A673 (cell line): ENCODE measurements at regions of chr9 and their contacts with region 1.

Region 1: GRCh38 chr9:5425006-5425628 is 12.6 kb downstream of the PLGRKT start:
- DNase-seq: peak; percentile 57
- H3K4me3 ChIP-seq: no peak overlapping the region
- H3K27ac ChIP-seq: no peak overlapping the region
- H3K4me1 ChIP-seq: no peaks in the 10 kb centered on the region
- H3K27me3 ChIP-seq: no peaks in the 10 kb centered on the region
- CTCF ChIP-seq: peak; percentile 58

Region 2: DNA sequence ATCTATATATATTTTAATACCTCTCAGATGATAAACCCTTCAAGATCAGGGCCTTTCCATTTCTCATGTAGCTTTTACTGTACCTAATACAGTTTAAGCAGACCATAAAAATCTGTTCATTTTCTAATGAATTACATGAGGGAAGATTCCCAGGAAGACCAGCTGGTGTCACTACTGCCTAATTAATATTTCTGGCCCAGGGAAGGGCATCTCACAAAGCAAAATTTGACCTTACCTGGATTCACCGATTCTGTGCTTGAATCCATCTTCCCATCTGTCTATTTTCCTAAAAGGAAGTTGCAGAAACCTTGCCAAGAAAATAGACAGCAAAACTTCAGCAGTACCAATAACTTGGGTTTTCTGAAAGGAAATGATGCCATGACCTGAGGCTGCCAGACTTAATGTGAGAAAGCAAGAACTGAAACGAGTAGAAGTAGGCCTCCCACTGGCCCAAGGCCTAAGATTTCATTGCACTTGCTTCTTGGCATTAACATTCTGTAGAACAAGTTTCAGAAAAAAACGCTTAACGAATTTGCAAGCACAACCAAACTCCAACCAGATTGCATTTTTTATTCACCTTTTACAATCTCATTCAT is 1042.3 kb before region 1 on chr9:
- CTCF ChIA-PET with region 1: no interaction called
- POLR2A ChIA-PET with region 1: no interaction called
- intact Hi-C with region 1: loop called (anchors 5 kb)
- DNase-seq: peak; percentile 63
- H3K4me3 ChIP-seq: no peak overlapping the region
- H3K27ac ChIP-seq: no peak overlapping the region
- H3K4me1 ChIP-seq: peaks cover 10% of the 10 kb centered on the region
- H3K27me3 ChIP-seq: no peaks in the 10 kb centered on the region
- CTCF ChIP-seq: peak; percentile 75

Region 3: DNA sequence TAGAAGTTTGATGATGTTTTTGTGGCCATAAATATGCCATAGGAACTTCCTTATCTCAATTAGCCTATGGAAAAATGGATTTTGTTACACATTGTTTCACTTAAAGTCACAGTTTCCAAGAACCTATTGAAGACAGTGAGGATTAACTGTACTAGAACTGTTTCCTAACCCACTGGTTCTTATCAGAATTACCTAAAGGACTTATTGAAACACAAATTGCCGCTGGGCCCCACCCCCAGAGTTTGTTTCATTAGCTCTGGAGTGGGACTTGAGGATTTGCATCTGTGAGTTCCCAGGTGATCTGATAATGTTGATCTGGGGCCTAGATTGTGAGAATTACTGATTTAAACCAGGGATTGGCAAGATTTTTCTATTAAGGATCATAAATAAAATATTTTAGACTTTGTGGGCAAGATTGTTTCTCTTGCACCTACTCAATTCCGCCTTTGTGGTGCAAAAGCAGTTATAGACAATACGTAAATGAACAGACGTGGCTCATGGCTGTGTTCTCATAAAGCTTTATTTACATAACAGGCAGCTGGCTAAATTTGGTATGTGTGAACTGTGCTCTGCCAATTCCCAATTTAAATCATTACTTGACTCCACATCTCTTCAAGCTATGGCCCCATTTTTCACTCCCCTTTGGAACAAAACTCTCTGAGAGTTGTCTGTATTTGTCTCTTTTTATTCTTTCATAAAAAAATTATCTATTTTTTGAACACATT is 430.8 kb before region 1 on chr9:
- CTCF ChIA-PET with region 1: no interaction called
- POLR2A ChIA-PET with region 1: no interaction called
- intact Hi-C with region 1: loop called (anchors 10 kb)
- DNase-seq: no peak
- H3K4me3 ChIP-seq: no peak overlapping the region
- H3K27ac ChIP-seq: no peak overlapping the region
- H3K4me1 ChIP-seq: peaks cover 4% of the 10 kb centered on the region
- H3K27me3 ChIP-seq: no peaks in the 10 kb centered on the region
- CTCF ChIP-seq: no peak

Region 4: DNA sequence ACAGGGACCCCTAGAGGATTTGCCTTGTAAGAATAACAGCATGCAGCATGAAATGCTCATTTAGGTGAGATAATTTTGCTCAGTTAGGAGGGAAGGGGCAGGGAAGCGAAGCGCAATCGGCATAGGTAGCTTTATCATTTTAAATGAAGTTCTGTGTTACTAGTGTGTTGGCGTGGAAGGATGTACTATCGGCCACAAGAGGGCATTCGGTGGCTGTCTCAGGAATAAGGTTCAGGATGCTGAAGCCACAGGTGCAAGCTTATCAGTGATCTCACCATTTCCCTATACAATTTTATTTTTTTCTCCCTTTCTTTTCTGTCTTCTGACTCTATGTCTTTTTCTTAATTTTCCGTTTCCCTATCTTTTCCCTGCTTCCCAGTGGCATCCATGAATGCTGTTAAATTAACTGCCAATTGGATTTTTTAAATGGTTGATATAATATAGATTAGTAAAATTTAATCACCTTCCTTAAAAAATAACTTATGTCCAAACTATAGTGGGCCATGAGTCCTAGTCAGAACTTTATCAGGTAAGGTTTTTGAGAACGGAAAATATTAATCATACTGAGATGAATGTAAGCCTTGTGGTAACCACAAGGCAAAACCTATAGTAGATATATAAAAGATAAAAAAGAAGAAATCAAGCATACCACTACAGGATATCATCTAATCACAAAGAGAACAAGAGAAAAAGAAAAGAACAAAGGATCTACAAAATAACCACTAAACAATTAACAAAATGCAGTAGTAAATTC is 238.5 kb before region 1 on chr9:
- CTCF ChIA-PET with region 1: interaction called, 4 read pairs
- POLR2A ChIA-PET with region 1: no interaction called
- intact Hi-C with region 1: loop called (anchors 2 kb)
- DNase-seq: peak; percentile 62
- H3K4me3 ChIP-seq: no peak overlapping the region
- H3K27ac ChIP-seq: no peak overlapping the region
- H3K4me1 ChIP-seq: no peaks in the 10 kb centered on the region
- H3K27me3 ChIP-seq: no peaks in the 10 kb centered on the region
- CTCF ChIP-seq: peak; percentile 84